ENCODE measurements at regions of chr15 and their contacts with region 1.

Region 1: GRCh38 chr15:53323191-53323590 is 436.3 kb downstream of the WDR72 start:
- DNase-seq: no peak
- H3K4me3 ChIP-seq: no peak overlapping the region
- H3K27ac ChIP-seq: no peak overlapping the region
- H3K4me1 ChIP-seq: no peaks in the 10 kb centered on the region
- H3K27me3 ChIP-seq: no peaks in the 10 kb centered on the region
- CTCF ChIP-seq: no peak

Region 2: GRCh38 chr15:53295574-53295973 is 27.6 kb before region 1 on chr15:
- CTCF ChIA-PET with region 1: no interaction called
- POLR2A ChIA-PET with region 1: interaction called, 20 read pairs
- intact Hi-C with region 1: no loop called
- DNase-seq: no peak
- H3K4me3 ChIP-seq: no peak overlapping the region
- H3K27ac ChIP-seq: no peak overlapping the region
- H3K4me1 ChIP-seq: no peaks in the 10 kb centered on the region
- H3K27me3 ChIP-seq: no peaks in the 10 kb centered on the region; the same call in 1 of the 2 replicates
- CTCF ChIP-seq: no peak

Measured in PC-9 (cell line).